Heart left ventricle (tissue), 16 donors: ENCODE measurements at regions of chr2 and their contacts with region 1.

Region 1: GRCh38 chr2:177148477-177149154 is 64.0 kb upstream of the HNRNPA3 start:
- DNase-seq: peak; percentile 66 to 82 (median 72)
- ATAC-seq: peak; percentile 64 to 95 (median 82)
- H3K4me3 ChIP-seq: peak overlapping the region in 11 of 12 donors; percentile 8 to 54 (median 45)
- H3K27ac ChIP-seq: no peak overlapping the region
- H3K4me1 ChIP-seq: peaks cover 0 to 14% (median 4%) of the 10 kb centered on the region in 12 donors
- H3K27me3 ChIP-seq: peaks cover 10 to 69% (median 47%) of the 10 kb centered on the region in 9 donors
- CTCF ChIP-seq: peak; percentile 58 to 86 (median 78)
- POLR2A ChIP-seq: no peak

Region 2: GRCh38 chr2:176653479-176654443 is 494.9 kb before region 1 on chr2:
- intact Hi-C with region 1: loop called in 3 of 10 experiments (anchors 5 to 10 kb)
- DNase-seq: peak; percentile 27 to 68 (median 49)
- ATAC-seq: peak; percentile 58 to 93 (median 84)
- H3K4me3 ChIP-seq: no peak overlapping the region
- H3K27ac ChIP-seq: no peak overlapping the region
- H3K4me1 ChIP-seq: peaks cover 0 to 8% (median 0%) of the 10 kb centered on the region in 12 donors
- H3K27me3 ChIP-seq: peaks cover 0 to 29% (median 3%) of the 10 kb centered on the region in 9 donors
- CTCF ChIP-seq: peak; percentile 31 to 74 (median 62)
- POLR2A ChIP-seq: no peak

Region 3: DNA sequence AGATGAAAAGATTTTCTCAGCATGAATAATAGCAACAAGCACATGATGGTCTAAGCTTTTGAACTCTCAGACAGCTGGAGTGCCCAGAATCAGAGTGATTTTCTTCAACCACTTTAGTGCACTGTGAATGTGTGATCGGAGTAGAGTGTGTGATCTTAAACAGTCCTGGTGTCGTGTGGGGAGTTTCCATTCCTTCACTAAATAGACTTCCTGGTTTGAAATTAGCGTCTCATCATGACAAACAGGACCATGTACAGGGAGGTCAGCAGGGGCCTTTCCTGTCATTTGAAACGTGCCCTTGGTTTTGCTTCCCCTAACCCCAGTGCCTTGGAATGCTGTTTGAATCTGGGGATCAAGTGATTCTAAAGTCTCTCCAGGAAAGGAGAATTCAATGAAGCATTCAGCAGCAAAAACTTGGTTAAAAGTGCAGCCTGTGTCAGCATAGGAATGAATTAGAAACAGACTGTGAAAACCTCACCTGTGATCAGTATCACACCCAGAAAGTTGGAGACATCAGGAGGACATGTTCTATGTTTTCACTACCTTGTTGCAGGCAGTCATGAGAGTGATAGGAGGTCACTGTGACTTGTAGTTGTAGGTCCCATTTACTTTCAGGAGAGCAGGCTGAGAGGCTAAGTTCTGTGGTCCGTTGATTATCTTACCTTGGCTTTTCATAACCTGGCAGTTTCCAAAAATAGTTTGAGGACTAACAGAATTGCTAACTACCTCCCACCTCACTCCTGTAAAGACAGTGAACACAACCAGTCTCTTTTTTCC is 479.0 kb before region 1 on chr2:
- intact Hi-C with region 1: loop called in 1 of 10 experiments (anchors 10 kb)
- DNase-seq: no peak
- ATAC-seq: peak in 3 of 4 donors; percentile 22 to 81 (median 44)
- H3K4me3 ChIP-seq: no peak overlapping the region
- H3K27ac ChIP-seq: peak overlapping the region in 6 of 12 donors; percentile 10 to 74 (median 34)
- H3K4me1 ChIP-seq: peaks cover 0 to 17% (median 2%) of the 10 kb centered on the region in 12 donors
- H3K27me3 ChIP-seq: peaks cover 0 to 6% (median 0%) of the 10 kb centered on the region in 9 donors
- CTCF ChIP-seq: no peak
- POLR2A ChIP-seq: no peak

Region 4: GRCh38 chr2:176685911-176686310 is 462.7 kb before region 1 on chr2:
- intact Hi-C with region 1: no loop called
- DNase-seq: no peak
- ATAC-seq: peak in 1 of 4 donors; percentile 29
- H3K4me3 ChIP-seq: no peak overlapping the region
- H3K27ac ChIP-seq: no peak overlapping the region
- H3K4me1 ChIP-seq: peaks cover 0 to 23% (median 5%) of the 10 kb centered on the region in 12 donors
- H3K27me3 ChIP-seq: peaks cover 0 to 9% (median 0%) of the 10 kb centered on the region in 9 donors
- CTCF ChIP-seq: no peak
- POLR2A ChIP-seq: no peak

Region 5: GRCh38 chr2:176814306-176815052 is 334.1 kb before region 1 on chr2:
- intact Hi-C with region 1: loop called in 1 of 10 experiments (anchors 10 kb)
- DNase-seq: no peak
- ATAC-seq: no peak
- H3K4me3 ChIP-seq: no peak overlapping the region
- H3K27ac ChIP-seq: peak overlapping the region in 1 of 12 donors; percentile 9
- H3K4me1 ChIP-seq: peaks cover 0 to 20% (median 3%) of the 10 kb centered on the region in 12 donors
- H3K27me3 ChIP-seq: peaks cover 0 to 14% (median 0%) of the 10 kb centered on the region in 9 donors
- CTCF ChIP-seq: peak; percentile 60 to 79 (median 68)
- POLR2A ChIP-seq: no peak

Region 6: DNA sequence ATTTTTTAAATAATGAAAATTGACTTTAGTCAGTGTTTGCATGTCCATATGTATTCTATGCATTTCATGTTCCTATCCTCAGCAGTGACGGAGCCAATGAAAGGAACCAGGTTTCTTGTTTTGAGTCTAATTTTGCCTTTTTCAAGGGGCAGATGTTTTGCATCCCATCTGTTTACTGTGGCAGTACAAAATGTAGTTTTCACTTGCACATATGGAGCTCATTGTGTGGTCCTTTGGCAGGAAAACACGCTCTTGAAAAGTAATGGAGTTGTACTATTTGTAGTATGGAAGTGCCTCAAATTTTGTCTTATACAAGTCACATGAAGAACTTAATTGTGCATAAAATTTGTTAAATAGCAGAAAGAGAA is 371.7 kb after region 1 on chr2:
- intact Hi-C with region 1: no loop called
- DNase-seq: no peak
- ATAC-seq: no peak
- H3K4me3 ChIP-seq: no peak overlapping the region
- H3K27ac ChIP-seq: no peak overlapping the region
- H3K4me1 ChIP-seq: no peaks in the 10 kb centered on the region
- H3K27me3 ChIP-seq: no peaks in the 10 kb centered on the region
- CTCF ChIP-seq: no peak
- POLR2A ChIP-seq: no peak